GM18951 (cell line): ENCODE measurements at regions of chr19 and their contacts with region 1.

Region 1: GRCh38 chr19:55503502-55504251 is 15.4 kb downstream of the SSC5D start:
- POLR2A ChIP-seq: no peak

Region 2: GRCh38 chr19:55622242-55622969 is 118.7 kb after region 1 on chr19:
- in situ Hi-C with region 1: no loop called
- POLR2A ChIP-seq: no peak

Region 3: GRCh38 chr19:55632463-55632834 is 128.8 kb after region 1 on chr19:
- in situ Hi-C with region 1: loop called (anchors 5 kb)
- POLR2A ChIP-seq: no peak